ENCODE measurements at regions of chr11 and their contacts with region 1.

Region 1: GRCh38 chr11:1572197-1573076 is at the start of gene DUSP8:
- DNase-seq: peak; percentile 89
- ATAC-seq: peak; percentile 43
- H3K4me3 Mint-ChIP-seq: peak within 1 kb of the TSS; percentile 64
- H3K27ac Mint-ChIP-seq: no peak within 1 kb of the TSS
- H3K4me1 Mint-ChIP-seq: peaks cover 12% of the 10 kb centered on the region
- H3K27me3 Mint-ChIP-seq: peaks cover 22% of the 10 kb centered on the region
- CTCF ChIP-seq: no peak
- total RNA-seq, gene DUSP8: 1.3 and 1.7 TPM in 2 replicates

Region 2: GRCh38 chr11:842370-843002 is 730.0 kb before region 1 on chr11 and contains the starts of genes POLR2L and TSPAN4:
- CTCF ChIA-PET with region 1: no interaction called
- POLR2A ChIA-PET with region 1: interaction called, 4 read pairs
- intact Hi-C with region 1: loop called (anchors 10 kb)
- DNase-seq: peak; percentile 92
- ATAC-seq: peak; percentile 87
- H3K4me3 Mint-ChIP-seq: peak within 1 kb of the TSS; percentile 89
- H3K27ac Mint-ChIP-seq: peak within 1 kb of the TSS; percentile 83
- H3K4me1 Mint-ChIP-seq: peaks cover 35% of the 10 kb centered on the region
- H3K27me3 Mint-ChIP-seq: peaks cover 5% of the 10 kb centered on the region
- CTCF ChIP-seq: no peak
- total RNA-seq, gene POLR2L: 83.9 and 90.2 TPM in 2 replicates
- total RNA-seq, gene TSPAN4: 2.2 and 2.3 TPM in 2 replicates

Region 3: DNA sequence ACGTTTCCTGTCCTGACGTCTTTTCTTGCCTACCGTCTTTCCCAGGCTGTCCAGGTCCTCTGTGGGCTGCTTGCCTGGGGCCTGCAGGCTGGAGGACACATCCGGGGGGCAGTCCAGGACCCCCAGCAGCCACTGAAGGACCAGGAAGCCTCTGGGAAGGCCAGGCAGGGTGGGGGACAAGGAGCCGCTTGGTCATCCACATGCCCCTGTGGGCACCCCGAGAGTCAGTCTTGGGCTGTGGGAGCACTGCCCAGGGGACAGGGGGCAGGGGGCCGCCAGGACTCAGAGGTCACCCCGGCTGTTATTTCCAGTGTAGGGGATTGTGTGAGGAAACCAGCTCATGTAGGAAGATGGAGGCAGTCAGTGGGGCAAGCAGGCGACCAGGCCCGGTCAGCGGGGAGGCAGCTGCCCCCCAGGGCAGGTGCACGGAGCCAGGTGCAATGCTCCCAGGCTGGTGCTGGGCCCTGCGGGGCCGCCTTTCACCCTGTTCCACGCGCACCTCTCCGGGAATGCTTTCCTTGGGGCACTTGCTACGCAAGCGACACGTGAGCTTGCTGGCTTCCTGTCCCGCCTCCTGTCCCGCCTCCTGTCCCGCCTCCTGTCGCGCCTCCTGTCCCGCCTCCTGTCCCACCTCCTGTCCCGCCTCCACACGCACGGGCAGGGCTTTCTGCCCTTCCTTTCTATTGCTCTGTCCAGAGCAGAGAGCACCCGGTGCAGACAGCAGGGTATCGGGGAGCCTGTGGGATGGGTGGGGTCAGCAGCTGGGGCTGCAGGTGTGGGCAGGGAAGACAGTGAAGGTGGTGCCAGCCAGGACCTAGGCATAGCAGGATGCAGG is 310.0 kb before region 1 on chr11:
- CTCF ChIA-PET with region 1: interaction called, 3 read pairs
- POLR2A ChIA-PET with region 1: interaction called, 3 read pairs
- intact Hi-C with region 1: loop called (anchors 1 kb)
- DNase-seq: peak; percentile 74
- ATAC-seq: peak; percentile 90
- H3K4me3 Mint-ChIP-seq: peak overlapping the region; percentile 79
- H3K27ac Mint-ChIP-seq: peak overlapping the region; percentile 83
- H3K4me1 Mint-ChIP-seq: peaks cover 15% of the 10 kb centered on the region
- H3K27me3 Mint-ChIP-seq: no peaks in the 10 kb centered on the region
- CTCF ChIP-seq: no peak

Region 4: DNA sequence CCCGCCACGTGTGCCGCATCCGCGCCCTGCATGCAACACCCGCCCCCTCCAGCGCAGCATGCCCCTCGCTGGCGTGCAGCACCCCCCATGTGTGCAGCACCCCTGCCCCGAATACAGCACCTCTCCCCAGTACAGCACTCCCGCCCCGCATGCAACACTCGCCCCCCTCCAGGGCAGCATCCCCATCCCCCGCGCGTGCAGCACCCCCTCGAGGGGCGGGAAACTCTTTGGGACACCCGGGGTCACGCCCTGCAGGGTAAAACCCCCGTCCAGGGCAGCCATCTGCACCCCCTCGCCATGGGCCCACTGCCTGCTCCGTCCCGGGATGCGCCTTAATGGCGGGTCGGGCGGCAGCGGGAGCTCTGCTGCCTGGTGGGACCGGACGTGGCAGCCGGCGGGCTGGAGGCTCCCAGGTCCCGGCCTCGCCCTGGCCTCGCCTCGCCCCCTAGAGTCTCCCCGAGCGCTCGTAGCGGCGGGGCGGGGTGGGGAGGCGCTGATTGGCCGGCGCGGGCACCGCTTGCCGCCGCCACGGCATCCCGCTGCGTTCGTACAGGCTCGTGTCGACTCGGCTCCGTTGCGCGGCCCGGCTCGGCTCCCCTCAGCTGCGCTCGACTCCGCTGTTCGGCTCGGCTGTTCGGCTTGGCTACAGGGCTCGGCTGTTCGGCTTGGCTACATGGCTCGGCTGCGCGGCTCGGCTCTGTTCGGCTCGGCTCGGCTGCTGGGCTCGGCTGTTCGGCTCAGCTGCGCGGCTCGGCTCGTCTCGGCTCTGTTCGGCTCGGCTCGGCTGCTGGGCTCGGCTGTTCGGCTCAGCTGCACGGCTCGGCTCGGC is 183.1 kb before region 1 on chr11:
- CTCF ChIA-PET with region 1: interaction called, 3 read pairs
- POLR2A ChIA-PET with region 1: no interaction called
- intact Hi-C with region 1: loop called (anchors 2 kb)
- DNase-seq: peak; percentile 94
- ATAC-seq: peak; percentile 95
- H3K4me3 Mint-ChIP-seq: peak overlapping the region; percentile 74
- H3K27ac Mint-ChIP-seq: no peak overlapping the region
- H3K4me1 Mint-ChIP-seq: peaks cover 33% of the 10 kb centered on the region
- H3K27me3 Mint-ChIP-seq: peaks cover 26% of the 10 kb centered on the region
- CTCF ChIP-seq: no peak

Region 5: DNA sequence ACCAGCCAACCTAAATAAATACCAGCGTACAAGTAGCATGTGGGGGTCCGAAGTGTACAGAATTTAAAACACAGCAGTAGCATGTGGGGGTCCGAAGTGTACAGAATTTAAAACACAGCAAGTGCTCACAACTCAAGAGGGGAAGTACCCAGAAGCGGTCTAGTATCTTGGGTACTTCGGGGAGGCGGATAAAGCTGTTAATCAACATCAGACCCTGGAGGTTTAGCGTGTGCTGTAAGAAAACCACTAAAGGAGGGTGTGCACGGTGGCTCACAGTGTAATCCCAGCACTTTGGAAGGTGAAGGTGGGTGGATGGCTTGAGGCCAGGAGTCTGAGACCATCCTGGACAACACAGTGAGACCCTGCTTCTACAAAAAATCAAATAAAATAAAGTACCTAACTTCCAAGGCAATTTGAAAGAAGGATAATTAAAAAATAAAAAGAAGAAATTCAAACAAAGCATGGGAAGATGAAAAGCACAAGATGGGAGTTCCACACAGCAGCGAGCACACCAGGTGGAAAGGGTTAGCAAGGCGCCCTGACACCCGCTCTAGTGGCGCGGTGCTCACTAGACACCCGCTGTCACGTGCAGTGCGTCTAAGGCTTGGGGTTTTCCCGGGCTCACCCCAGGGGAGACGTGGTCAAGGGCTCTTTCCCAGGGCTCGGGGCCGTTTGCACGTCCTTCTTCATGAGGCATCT is 50.9 kb before region 1 on chr11:
- CTCF ChIA-PET with region 1: interaction called, 13 read pairs
- POLR2A ChIA-PET with region 1: interaction called, 13 read pairs
- intact Hi-C with region 1: loop called (anchors 1 kb)
- DNase-seq: peak; percentile 79
- ATAC-seq: peak; percentile 94
- H3K4me3 Mint-ChIP-seq: peak overlapping the region; percentile 76
- H3K27ac Mint-ChIP-seq: peak overlapping the region; percentile 74
- H3K4me1 Mint-ChIP-seq: peaks cover 68% of the 10 kb centered on the region
- H3K27me3 Mint-ChIP-seq: no peaks in the 10 kb centered on the region
- CTCF ChIP-seq: no peak

Region 6: GRCh38 chr11:1586699-1587098 is 14.3 kb after region 1 on chr11:
- CTCF ChIA-PET with region 1: interaction called, 3 read pairs
- POLR2A ChIA-PET with region 1: interaction called, 10 read pairs
- intact Hi-C with region 1: no loop called
- DNase-seq: no peak
- ATAC-seq: no peak
- H3K4me3 Mint-ChIP-seq: no peak overlapping the region
- H3K27ac Mint-ChIP-seq: no peak overlapping the region
- H3K4me1 Mint-ChIP-seq: peaks cover 36% of the 10 kb centered on the region
- H3K27me3 Mint-ChIP-seq: peaks cover 21% of the 10 kb centered on the region
- CTCF ChIP-seq: no peak